Panc1 (cell line): ENCODE measurements at regions of chr6 and their contacts with region 1.

Region 1: GRCh38 chr6:122615409-122615808 is 5.2 kb downstream of the PKIB start:
- DNase-seq: no peak
- ATAC-seq: no peak
- H3K4me3 ChIP-seq: no peak overlapping the region
- H3K27ac ChIP-seq: no peak overlapping the region
- H3K4me1 ChIP-seq: peaks cover 7% of the 10 kb centered on the region; the same call in 1 of the 2 replicates
- H3K27me3 ChIP-seq: peaks cover 20% of the 10 kb centered on the region
- CTCF ChIP-seq: no peak

Region 2: DNA sequence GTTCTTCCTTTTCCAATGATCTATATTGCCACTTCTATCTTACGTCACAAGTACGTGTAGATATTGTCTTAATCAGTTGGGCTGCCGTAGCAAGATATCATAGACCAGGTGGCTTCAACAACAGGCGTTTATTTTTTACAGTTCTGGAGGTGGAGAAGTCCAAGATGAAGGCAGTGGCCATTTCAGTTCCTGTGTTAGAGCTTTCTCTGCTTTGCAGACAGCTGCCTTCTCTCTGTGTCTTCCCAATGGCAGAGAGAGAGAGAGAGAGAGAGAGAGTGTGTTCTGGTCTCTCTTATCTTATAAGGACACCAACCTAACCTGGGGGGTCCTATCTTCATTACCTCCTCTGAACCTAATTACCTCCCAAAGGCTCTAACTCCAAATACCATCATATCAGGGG is 207.7 kb before region 1 on chr6:
- CTCF ChIA-PET with region 1: no interaction called
- POLR2A ChIA-PET with region 1: interaction called, 11 read pairs
- in situ Hi-C with region 1: no loop called
- intact Hi-C with region 1: no loop called
- DNase-seq: no peak
- ATAC-seq: no peak
- H3K4me3 ChIP-seq: no peak overlapping the region
- H3K27ac ChIP-seq: no peak overlapping the region
- H3K4me1 ChIP-seq: no peaks in the 10 kb centered on the region
- H3K27me3 ChIP-seq: no peaks in the 10 kb centered on the region
- CTCF ChIP-seq: no peak

Region 3: DNA sequence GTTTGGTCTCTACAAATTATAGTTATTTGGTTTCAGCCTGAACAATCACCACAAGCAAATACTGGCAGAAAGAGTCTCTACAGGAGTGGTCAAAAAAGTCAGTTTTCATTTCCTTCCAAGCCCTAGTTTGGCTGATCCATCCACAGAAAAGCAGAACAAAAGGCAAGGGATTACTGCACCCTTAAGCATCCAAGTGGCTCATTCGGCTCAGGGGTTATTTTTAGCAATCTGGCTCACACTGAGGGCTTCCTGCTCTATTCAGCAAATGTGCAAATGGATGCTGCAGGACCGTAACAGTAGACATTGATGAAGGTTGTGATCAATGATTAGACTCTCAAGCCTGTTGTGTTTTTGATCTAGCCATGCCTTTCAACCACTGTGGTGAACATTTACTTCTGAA is 101.9 kb after region 1 on chr6:
- CTCF ChIA-PET with region 1: no interaction called
- POLR2A ChIA-PET with region 1: no interaction called
- in situ Hi-C with region 1: no loop called
- intact Hi-C with region 1: no loop called
- DNase-seq: no peak
- ATAC-seq: no peak
- H3K4me3 ChIP-seq: no peak overlapping the region
- H3K27ac ChIP-seq: no peak overlapping the region
- H3K4me1 ChIP-seq: no peaks in the 10 kb centered on the region
- H3K27me3 ChIP-seq: peaks cover 7% of the 10 kb centered on the region
- CTCF ChIP-seq: no peak

Region 4: DNA sequence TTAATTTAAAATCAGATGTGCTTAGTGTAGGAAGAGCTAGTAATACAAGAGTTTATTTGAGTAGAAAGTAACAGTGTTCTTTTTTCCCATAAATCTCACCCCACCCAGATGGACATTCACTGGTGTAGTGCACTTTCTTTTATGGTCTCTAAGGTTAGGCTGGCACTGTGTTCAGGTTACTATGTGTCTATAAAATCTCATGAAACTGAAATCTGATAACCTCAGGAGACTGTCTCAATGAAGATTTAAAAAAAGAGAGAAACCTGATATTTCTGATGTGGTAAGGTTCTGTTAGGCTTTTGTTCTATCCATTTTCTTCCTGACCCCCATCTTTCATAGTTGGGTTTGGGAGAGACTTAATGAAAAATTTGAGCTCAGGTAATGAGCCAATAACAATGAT is 279.4 kb after region 1 on chr6:
- CTCF ChIA-PET with region 1: no interaction called
- POLR2A ChIA-PET with region 1: no interaction called
- in situ Hi-C with region 1: no loop called
- intact Hi-C with region 1: no loop called
- DNase-seq: no peak
- ATAC-seq: no peak
- H3K4me3 ChIP-seq: no peak overlapping the region
- H3K27ac ChIP-seq: no peak overlapping the region
- H3K4me1 ChIP-seq: no peaks in the 10 kb centered on the region
- H3K27me3 ChIP-seq: no peaks in the 10 kb centered on the region
- CTCF ChIP-seq: no peak